HCT116 (cell line): ENCODE measurements at regions of chr7 and their contacts with region 1.

Region 1: DNA sequence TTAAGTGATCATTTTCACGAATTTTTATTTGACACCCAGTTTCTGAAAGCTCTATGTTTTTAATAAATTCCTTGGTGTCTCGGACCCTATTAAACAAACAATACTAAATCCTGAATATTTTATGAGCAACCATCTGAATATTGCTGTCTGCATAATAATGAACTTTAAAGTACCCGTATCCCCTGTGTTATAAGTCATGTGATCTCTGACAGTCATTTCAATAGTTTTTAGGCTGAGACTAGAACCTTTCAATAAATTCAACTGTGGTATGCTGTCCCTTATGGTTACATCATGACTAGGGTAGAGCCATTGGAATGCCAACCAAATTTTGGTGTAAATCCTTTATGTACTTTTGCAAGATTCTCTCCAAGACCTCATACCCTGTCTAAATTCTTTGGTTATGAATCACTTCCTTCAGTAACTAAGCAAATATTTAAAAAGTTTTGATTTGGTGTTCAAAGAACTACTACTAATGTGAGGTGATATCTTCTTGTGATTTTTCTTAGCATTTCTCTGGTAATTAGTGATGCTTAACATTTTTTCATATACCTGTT is 20.8 kb upstream of the OR6B1 start:
- DNase-seq: no peak
- ATAC-seq: no peak
- H3K4me3 ChIP-seq: no peak overlapping the region
- H3K27ac ChIP-seq: no peak overlapping the region
- H3K4me1 ChIP-seq: no peaks in the 10 kb centered on the region
- H3K27me3 ChIP-seq: no peaks in the 10 kb centered on the region
- CTCF ChIP-seq: no peak
- POLR2A ChIP-seq: no peak
- RAD21 ChIP-seq: no peak

Region 2: GRCh38 chr7:142153400-142153799 is 1825.9 kb before region 1 on chr7:
- CTCF ChIA-PET with region 1: no interaction called
- POLR2A ChIA-PET with region 1: no interaction called
- RAD21 ChIA-PET with region 1: no interaction called
- intact Hi-C with region 1: no loop called
- DNase-seq: no peak
- ATAC-seq: peak; percentile 78
- H3K4me3 ChIP-seq: no peak overlapping the region
- H3K27ac ChIP-seq: no peak overlapping the region
- H3K4me1 ChIP-seq: no peaks in the 10 kb centered on the region
- H3K27me3 ChIP-seq: no peaks in the 10 kb centered on the region
- CTCF ChIP-seq: peak; percentile 20 to 54 (median 53); a peak in 5 of 6 replicates
- POLR2A ChIP-seq: no peak
- RAD21 ChIP-seq: peak; percentile 52

Region 3: GRCh38 chr7:144011458-144012230 is 32.4 kb after region 1 on chr7:
- CTCF ChIA-PET with region 1: no interaction called
- POLR2A ChIA-PET with region 1: no interaction called
- RAD21 ChIA-PET with region 1: no interaction called
- intact Hi-C with region 1: loop called (anchors 5 kb)
- DNase-seq: no peak
- ATAC-seq: no peak
- H3K4me3 ChIP-seq: no peak overlapping the region
- H3K27ac ChIP-seq: no peak overlapping the region
- H3K4me1 ChIP-seq: no peaks in the 10 kb centered on the region
- H3K27me3 ChIP-seq: no peaks in the 10 kb centered on the region
- CTCF ChIP-seq: peak in 1 of 3 experiments; percentile 11; a peak in 1 of 6 replicates
- POLR2A ChIP-seq: no peak
- RAD21 ChIP-seq: no peak